ENCODE measurements at regions of chr6 and their contacts with region 1.

Region 1: GRCh38 chr6:135851442-135852271 is at the start of gene PDE7B:
- DNase-seq: peak; percentile 47
- ATAC-seq: peak; percentile 97
- H3K4me3 Mint-ChIP-seq: peak within 1 kb of the TSS; percentile 83
- H3K27ac Mint-ChIP-seq: peak within 1 kb of the TSS; percentile 82
- H3K4me1 Mint-ChIP-seq: peaks cover 58% of the 10 kb centered on the region
- H3K27me3 Mint-ChIP-seq: no peaks in the 10 kb centered on the region
- CTCF ChIP-seq: no peak
- total RNA-seq, gene PDE7B: 1.5 and 1.8 TPM in 2 replicates

Region 2: DNA sequence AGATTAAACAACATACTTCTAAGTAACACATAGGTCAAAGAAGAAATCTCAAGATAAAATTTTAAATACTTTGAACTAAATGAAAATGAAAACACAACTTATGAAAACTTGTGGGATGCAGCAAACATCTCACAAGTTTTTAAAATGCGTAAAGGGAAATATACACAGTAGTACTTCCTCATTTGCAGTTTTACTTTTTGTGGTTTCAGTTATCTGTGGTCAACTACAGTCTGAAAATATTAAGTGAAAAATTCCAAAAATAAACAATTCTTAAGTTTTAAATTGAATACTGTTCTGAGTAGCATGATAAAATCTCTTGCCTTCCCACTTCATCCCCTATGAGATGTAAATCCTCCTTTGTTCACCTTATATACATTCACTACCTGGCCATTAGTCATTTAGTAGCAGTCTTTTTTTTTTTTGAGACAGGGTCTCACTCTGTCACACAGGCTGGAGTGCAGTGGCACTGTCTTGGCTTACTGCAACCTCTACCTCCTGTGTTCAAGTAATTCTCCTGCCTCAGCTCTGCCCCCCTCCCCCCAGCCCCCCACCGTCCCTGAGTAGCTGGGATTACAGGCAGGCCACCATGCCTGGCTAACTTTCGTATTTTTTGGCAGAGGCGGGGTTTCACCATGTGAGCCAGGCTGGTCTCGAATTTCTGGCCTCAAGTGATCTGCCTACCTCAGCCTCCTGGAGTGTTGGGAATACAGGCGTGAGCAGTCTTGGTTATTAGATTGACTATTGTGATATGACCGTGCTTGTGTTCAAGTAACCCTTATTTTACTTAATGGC is 199.5 kb before region 1 on chr6:
- CTCF ChIA-PET with region 1: no interaction called
- POLR2A ChIA-PET with region 1: no interaction called
- intact Hi-C with region 1: loop called (anchors 5 kb)
- DNase-seq: no peak
- ATAC-seq: peak; percentile 82
- H3K4me3 Mint-ChIP-seq: peak overlapping the region; percentile 49
- H3K27ac Mint-ChIP-seq: peak overlapping the region; percentile 76
- H3K4me1 Mint-ChIP-seq: peaks cover 22% of the 10 kb centered on the region
- H3K27me3 Mint-ChIP-seq: no peaks in the 10 kb centered on the region
- CTCF ChIP-seq: no peak

Region 3: DNA sequence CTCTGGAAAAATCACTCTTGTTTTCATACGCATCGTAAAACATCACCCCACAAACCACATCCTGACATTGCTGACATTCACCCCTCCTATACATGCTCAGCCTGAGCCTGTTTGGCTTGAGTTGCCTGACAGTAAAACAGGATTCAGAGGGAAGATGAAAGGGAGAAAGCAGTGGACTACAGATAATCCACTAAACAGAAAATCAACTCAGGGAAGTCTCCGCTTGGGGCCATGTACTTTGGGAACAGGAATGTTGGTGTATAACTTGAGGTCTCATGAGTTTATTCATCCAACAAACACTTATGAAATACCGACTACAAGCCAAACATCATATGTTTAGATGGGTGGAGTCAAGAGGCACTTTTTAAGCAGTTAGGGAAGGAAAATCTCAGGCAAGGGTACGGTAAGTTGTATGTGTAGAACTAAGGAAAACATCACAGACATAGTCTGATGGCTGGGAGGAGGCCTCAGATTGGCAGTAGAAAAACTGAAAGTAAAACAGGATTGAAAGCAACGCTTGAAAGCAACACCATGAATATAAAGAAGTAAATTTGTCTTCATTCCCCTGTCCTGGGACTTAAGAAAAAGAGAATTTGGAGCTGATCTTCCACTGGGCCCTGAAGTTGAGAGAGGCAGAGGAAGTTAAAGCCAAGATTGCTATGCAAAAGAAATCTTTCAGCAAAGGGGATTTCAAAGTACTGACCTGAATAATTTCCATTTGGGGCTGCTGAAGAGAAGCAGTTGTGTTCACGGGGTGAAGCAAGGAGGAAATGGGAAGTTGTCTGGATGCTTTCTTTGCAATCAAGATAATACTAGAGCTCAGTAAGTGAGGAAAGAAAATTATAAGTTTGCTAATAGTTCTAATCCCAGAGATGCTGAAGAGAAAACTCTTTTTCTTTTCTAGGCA is 28.7 kb after region 1 on chr6:
- CTCF ChIA-PET with region 1: no interaction called
- POLR2A ChIA-PET with region 1: interaction called, 16 read pairs
- intact Hi-C with region 1: loop called (anchors 1 kb)
- DNase-seq: no peak
- ATAC-seq: peak; percentile 84
- H3K4me3 Mint-ChIP-seq: peak overlapping the region; percentile 80
- H3K27ac Mint-ChIP-seq: peak overlapping the region; percentile 98
- H3K4me1 Mint-ChIP-seq: peaks cover 46% of the 10 kb centered on the region
- H3K27me3 Mint-ChIP-seq: no peaks in the 10 kb centered on the region
- CTCF ChIP-seq: no peak

Region 4: DNA sequence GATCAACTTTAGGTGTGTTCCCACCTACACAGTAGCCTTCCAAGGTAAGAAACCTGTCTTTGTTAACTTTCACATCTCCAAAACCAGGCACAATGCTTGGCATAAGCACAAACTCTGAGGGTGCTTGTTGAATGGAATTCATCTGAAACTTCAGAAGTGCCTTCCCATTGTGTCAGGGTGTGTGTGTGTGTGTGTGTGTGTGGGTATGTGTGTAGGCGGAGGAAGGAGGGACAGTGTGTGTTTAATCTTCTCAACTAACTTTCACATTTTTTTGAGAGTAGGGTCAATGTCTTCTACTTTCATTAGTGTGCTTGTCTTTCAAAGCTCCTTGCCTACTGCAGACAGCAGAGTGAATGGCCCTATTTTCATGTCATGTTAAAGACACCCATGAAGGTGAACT is 45.4 kb after region 1 on chr6:
- CTCF ChIA-PET with region 1: no interaction called
- POLR2A ChIA-PET with region 1: no interaction called
- intact Hi-C with region 1: no loop called
- DNase-seq: no peak
- ATAC-seq: no peak
- H3K4me3 Mint-ChIP-seq: no peak overlapping the region
- H3K27ac Mint-ChIP-seq: no peak overlapping the region
- H3K4me1 Mint-ChIP-seq: peaks cover 11% of the 10 kb centered on the region
- H3K27me3 Mint-ChIP-seq: no peaks in the 10 kb centered on the region
- CTCF ChIP-seq: no peak